Endothelial cell of umbilical vein (primary cell): ENCODE measurements at regions of chr11 and their contacts with region 1.

Region 1: GRCh38 chr11:95089620-95090542 is at the start of gene ENDOD1:
- DNase-seq: peak; percentile 87
- H3K4me3 ChIP-seq: peak within 1 kb of the TSS; percentile 31 to 81 (median 67)
- H3K27ac ChIP-seq: peak within 1 kb of the TSS; percentile 39
- H3K4me1 ChIP-seq: peaks cover 10% of the 10 kb centered on the region
- H3K27me3 ChIP-seq: no peaks in the 10 kb centered on the region
- CTCF ChIP-seq: peak in 1 of 2 donors; percentile 5
- POLR2A ChIP-seq: peak; percentile 17
- total RNA-seq, gene ENDOD1: 17.1 and 20.5 TPM in 2 replicates

Region 2: DNA sequence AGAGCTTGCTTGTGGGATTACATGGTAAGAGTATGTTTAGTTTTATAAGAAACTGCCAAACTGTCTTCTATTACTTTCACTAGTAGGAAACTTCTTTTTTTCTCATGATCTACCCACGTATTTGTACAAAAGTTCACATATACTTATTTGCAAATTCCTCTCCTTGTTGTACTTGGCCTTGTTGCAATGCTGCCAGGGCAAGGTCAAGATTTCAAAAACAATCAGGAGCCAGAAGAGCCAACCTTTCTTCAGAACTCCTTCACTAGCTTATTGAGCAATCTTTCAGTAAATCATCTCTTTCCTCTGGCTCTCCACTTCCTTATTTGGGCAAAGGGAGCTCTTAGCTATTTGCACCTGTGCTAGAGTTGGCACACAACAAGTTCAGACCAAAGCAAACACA is 13.5 kb before region 1 on chr11:
- CTCF ChIA-PET with region 1: interaction called, 91 read pairs
- POLR2A ChIA-PET with region 1: interaction called, 4 read pairs
- dilution Hi-C with region 1: no loop called
- intact Hi-C with region 1: no loop called
- DNase-seq: peak; percentile 90
- H3K4me3 ChIP-seq: no peak overlapping the region
- H3K27ac ChIP-seq: no peak overlapping the region
- H3K4me1 ChIP-seq: peaks cover 13% of the 10 kb centered on the region
- H3K27me3 ChIP-seq: no peaks in the 10 kb centered on the region
- CTCF ChIP-seq: no peak
- POLR2A ChIP-seq: no peak

Region 3: DNA sequence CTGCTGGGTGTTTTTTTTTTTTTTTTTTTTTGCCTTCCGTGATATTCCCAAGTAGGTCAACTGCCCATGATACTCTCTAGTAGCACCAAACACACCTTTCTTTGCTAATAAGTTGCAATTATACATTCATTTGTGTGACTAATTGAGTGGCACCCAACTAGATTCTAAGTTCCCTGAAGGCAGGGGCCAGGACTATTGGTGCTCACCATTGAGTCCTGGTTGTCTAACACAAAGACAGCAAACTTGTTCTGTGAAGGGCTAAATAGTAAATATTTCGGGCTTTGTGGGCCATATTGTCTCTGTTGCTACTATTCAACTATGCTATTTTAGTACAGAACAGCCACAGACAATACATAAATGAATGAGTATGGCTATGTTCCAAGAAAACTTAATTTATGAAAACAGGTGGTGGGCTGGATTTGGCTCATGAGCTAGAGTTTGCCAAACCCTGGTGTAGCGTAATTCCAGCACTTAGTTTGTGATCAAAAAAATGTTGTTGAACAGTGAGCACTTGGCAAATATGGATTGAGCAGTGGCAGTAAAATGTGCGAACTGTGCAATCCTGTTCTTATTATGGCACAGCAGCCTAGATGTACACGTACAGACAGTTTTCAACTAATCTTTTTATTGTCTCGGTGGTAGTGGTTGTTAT is 11.1 kb after region 1 on chr11:
- CTCF ChIA-PET with region 1: interaction called, 51 read pairs
- POLR2A ChIA-PET with region 1: interaction called, 3 read pairs
- dilution Hi-C with region 1: no loop called
- intact Hi-C with region 1: no loop called
- DNase-seq: peak; percentile 39
- H3K4me3 ChIP-seq: no peak overlapping the region
- H3K27ac ChIP-seq: no peak overlapping the region
- H3K4me1 ChIP-seq: peaks cover 3% of the 10 kb centered on the region
- H3K27me3 ChIP-seq: no peaks in the 10 kb centered on the region
- CTCF ChIP-seq: no peak
- POLR2A ChIP-seq: no peak

Region 4: DNA sequence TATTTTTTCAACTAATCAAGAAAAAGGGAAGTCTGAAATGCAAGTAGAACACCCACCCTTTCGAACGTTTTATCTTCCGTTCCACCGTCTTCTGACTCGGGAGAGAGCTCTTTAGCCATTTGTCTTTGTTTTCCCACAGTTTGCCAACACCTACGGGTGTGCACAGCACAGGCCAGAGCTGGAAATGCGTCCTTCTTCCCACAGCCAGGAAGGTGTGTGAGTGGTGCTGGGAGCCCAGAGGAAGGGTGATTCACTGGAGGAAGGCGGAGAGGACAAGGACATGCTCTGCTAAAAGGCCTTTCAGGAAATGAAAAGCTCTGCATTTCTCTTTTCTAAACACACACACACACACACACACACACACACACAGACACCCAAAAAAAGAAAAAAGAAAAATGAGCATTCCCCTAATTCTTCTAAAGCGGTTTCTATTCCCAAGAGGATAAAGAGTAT is 18.3 kb after region 1 on chr11:
- CTCF ChIA-PET with region 1: interaction called, 51 read pairs
- POLR2A ChIA-PET with region 1: interaction called, 7 read pairs
- dilution Hi-C with region 1: no loop called
- intact Hi-C with region 1: loop called (anchors 1 kb)
- DNase-seq: peak; percentile 90
- H3K4me3 ChIP-seq: peak overlapping the region in 1 of 3 experiments; percentile 5
- H3K27ac ChIP-seq: peak overlapping the region; percentile 76
- H3K4me1 ChIP-seq: peaks cover 28% of the 10 kb centered on the region
- H3K27me3 ChIP-seq: no peaks in the 10 kb centered on the region
- CTCF ChIP-seq: no peak
- POLR2A ChIP-seq: peak; percentile 31

Region 5: GRCh38 chr11:95193541-95193940 is 103.7 kb after region 1 on chr11:
- CTCF ChIA-PET with region 1: no interaction called
- POLR2A ChIA-PET with region 1: no interaction called
- dilution Hi-C with region 1: no loop called
- intact Hi-C with region 1: no loop called
- DNase-seq: no peak
- H3K4me3 ChIP-seq: no peak overlapping the region
- H3K27ac ChIP-seq: no peak overlapping the region
- H3K4me1 ChIP-seq: no peaks in the 10 kb centered on the region
- H3K27me3 ChIP-seq: no peaks in the 10 kb centered on the region
- CTCF ChIP-seq: no peak
- POLR2A ChIP-seq: no peak